ENCODE measurements at regions of chr2 and their contacts with region 1.

Region 1: GRCh38 chr2:178241844-178242551 is 47.7 kb downstream of the OSBPL6 start:
- DNase-seq: peak in 37 of 42 donors; percentile 11 to 87 (median 55)

Region 2: DNA sequence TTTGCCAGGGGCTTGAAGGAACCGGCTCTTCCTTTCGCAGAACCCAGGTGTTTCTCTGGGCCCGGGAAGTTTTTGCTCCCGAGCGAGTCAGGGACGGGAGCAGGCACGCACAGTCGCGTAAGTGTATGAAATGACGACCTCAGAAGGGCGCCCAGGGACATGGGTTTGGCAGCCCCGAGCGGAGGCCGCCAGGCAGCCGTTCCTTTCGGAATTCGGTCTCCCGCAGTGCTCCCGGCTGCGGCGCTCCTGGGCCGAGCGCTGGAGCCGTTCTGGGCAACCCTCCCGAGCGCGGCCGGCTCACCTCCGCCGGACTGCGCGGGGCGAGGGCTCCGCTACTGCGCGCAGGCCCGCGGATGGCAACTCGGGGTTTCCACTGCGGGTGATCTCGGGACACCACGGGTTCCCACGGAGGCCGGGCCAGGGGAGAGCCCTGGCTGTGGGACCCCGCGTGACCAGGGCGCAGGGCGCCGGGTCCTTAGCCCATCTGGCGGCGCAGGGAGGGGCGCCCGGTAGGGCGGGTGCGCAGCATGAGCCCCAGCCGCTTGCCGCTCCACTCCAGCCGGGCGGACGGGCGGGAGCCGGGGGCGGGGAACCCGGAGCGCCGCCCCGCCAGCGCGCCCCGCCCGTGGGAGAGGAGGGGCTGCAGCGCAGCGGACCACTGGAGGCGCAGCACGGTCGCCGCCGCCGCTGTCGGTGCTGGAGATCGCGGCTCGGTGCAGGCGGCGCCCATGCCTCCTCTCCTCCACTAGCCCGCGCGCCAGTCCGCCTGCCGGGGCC is 48.0 kb before region 1 on chr2 and contains the start of gene OSBPL6:
- intact Hi-C with region 1: loop called (anchors 10 kb)
- DNase-seq: peak; percentile 36 to 92 (median 83)

Region 3: GRCh38 chr2:178478439-178479274 is 236.7 kb after region 1 on chr2 and contains the start of gene FKBP7:
- intact Hi-C with region 1: no loop called
- DNase-seq: peak; percentile 83 to 96 (median 92)

Region 4: DNA sequence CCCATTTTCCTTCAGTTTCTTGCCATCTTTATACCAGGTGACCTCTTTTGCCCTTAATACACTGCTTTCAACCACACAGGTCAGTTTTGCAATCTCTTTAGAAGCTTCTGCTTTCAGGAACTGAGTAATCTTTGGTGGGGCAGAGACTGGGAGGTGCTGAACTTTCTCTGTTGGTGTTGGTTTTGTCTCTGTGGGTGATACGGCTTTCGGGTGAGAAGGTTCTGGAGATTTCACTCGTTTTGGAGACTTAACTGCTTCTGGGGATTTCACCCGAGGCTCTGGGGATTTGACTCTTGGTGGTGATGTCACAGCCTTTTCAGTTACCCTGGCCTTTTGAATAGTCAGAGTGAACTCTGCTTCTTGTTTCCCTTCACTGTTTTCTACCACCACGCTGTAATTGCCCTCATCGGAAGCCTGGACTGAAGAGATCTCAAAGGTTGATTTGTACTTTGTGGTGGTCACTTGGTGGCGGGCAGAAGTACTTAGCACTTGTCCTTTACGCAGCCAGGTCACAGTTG is 288.7 kb after region 1 on chr2:
- intact Hi-C with region 1: no loop called
- DNase-seq: no peak

Measured in head of caudate nucleus (tissue), 42 donors.